ENCODE measurements at regions of chr7 and their contacts with region 1.

Region 1: DNA sequence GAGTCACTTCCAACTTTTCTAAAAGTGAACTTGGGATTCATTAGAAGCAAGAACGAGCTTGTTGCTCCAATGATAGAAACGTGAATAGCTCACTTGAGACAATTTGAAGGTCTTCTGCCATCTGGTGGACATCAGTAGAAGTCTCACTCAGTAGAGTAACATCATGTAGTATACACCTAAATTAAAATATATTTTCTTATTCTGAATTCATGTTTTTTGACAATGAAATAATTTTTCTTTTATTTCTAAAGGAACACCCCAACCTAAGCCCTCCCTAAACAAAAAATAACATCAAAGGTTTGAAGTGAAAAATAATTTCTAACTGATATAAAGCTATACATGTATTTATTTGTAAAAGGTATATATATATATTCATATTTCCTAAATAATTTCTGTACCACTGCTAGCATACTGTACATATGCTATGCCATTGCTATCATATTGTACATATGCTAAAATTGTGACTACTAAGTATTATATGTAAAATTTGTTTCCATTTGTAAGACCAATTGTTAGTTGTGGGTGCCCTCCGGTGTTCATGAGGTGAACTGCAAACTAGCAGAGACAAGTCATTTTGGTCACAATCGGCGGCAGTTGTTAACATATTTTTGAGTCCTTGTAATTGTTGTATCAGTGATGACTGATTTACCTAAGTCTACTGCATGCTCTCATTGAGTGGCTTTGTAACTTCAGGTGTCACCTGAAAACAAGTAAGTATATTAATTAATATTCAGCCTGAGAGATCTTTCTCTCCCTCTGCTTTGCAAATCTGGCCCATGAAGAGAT is 121.9 kb downstream of the PTPRZ1 start:
- DNase-seq: peak; percentile 55
- H3K4me3 ChIP-seq: no peak overlapping the region
- H3K27ac ChIP-seq: no peak overlapping the region
- H3K27me3 ChIP-seq: no peaks in the 10 kb centered on the region
- CTCF ChIP-seq: peak; percentile 79

Region 2: GRCh38 chr7:121605317-121605680 is 389.5 kb before region 1 on chr7:
- CTCF ChIA-PET with region 1: interaction called, 31 read pairs
- POLR2A ChIA-PET with region 1: no interaction called
- DNase-seq: no peak
- H3K4me3 ChIP-seq: no peak overlapping the region
- H3K27ac ChIP-seq: no peak overlapping the region
- H3K27me3 ChIP-seq: no peaks in the 10 kb centered on the region
- CTCF ChIP-seq: 0 out of 2 replicates have a peak, but pooled peaks have one; percentile 19

Region 3: DNA sequence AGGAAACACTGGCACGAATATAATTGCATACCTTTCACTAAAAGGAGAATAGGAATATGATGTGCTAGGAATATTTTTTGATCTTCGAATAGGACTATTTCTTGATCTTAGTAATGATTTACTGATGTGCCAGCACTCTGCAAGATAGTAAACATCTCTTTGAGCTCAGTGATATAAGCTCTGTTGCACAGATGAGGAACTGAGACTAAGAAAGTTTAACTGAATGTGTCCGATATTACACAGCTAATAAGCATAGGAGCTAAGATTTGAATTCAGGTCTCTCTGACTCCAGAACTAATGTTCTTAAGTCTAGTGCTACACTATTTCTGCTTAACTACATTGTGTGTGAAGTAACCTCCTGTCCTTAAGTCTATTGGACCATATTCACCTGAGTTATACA is 220.3 kb before region 1 on chr7:
- CTCF ChIA-PET with region 1: interaction called, 12 read pairs
- POLR2A ChIA-PET with region 1: no interaction called
- DNase-seq: no peak
- H3K4me3 ChIP-seq: no peak overlapping the region
- H3K27ac ChIP-seq: no peak overlapping the region
- H3K27me3 ChIP-seq: no peaks in the 10 kb centered on the region
- CTCF ChIP-seq: no peak

Region 4: GRCh38 chr7:121872831-121873288 is 122.0 kb before region 1 on chr7 and contains the start of gene PTPRZ1:
- CTCF ChIA-PET with region 1: interaction called, 19 read pairs
- POLR2A ChIA-PET with region 1: no interaction called
- DNase-seq: no peak
- H3K4me3 ChIP-seq: peak within 1 kb of the TSS; percentile 54
- H3K27ac ChIP-seq: no peak within 1 kb of the TSS
- H3K27me3 ChIP-seq: peaks cover 36% of the 10 kb centered on the region
- CTCF ChIP-seq: no peak
- polyA plus RNA-seq, gene PTPRZ1: not detected in 2 replicates

Region 5: DNA sequence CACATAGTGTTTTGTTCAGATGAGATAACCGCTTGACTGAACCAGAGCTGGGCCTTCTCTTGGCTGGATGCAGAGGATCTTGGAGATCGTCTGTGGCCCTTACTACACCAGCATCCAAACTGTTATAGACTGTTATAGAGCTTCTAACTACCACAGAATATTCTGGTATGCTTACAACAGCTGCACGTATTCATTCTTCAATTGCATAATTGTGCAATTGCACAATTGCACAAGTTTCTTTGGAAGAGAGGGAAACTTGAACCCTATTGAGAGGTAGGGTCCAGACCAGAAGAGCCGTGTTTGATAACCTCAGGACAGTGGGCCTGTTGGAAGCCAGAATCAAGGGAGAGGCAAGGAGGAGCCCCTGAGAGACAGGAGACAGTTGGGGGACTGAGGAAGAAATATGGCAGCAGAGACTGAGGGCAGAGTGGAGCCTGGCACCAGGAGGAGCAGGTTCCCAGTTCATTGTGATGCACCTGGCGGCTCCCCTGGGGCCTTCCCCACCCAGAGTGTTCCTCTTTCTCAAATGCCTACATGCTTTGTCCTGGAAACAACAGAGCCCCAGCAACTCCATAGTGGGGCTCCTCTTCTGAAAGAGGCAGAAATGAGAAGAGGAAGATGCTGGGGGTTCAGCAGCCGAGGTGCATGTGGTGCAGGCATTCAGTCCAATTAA is 57.7 kb before region 1 on chr7:
- CTCF ChIA-PET with region 1: interaction called, 15 read pairs
- POLR2A ChIA-PET with region 1: no interaction called
- DNase-seq: no peak
- H3K4me3 ChIP-seq: no peak overlapping the region
- H3K27ac ChIP-seq: no peak overlapping the region
- H3K27me3 ChIP-seq: no peaks in the 10 kb centered on the region
- CTCF ChIP-seq: no peak

Region 6: GRCh38 chr7:121961089-121961867 is 33.5 kb before region 1 on chr7:
- CTCF ChIA-PET with region 1: interaction called, 24 read pairs
- POLR2A ChIA-PET with region 1: no interaction called
- DNase-seq: peak; percentile 26
- H3K4me3 ChIP-seq: no peak overlapping the region
- H3K27ac ChIP-seq: peak overlapping the region; percentile 32
- H3K27me3 ChIP-seq: no peaks in the 10 kb centered on the region
- CTCF ChIP-seq: no peak

Region 7: GRCh38 chr7:122014697-122015096 is 19.9 kb after region 1 on chr7:
- CTCF ChIA-PET with region 1: interaction called, 18 read pairs
- POLR2A ChIA-PET with region 1: no interaction called
- DNase-seq: no peak
- H3K4me3 ChIP-seq: no peak overlapping the region
- H3K27ac ChIP-seq: no peak overlapping the region
- H3K27me3 ChIP-seq: no peaks in the 10 kb centered on the region
- CTCF ChIP-seq: 0 out of 2 replicates have a peak, but pooled peaks have one; percentile 19

Region 8: DNA sequence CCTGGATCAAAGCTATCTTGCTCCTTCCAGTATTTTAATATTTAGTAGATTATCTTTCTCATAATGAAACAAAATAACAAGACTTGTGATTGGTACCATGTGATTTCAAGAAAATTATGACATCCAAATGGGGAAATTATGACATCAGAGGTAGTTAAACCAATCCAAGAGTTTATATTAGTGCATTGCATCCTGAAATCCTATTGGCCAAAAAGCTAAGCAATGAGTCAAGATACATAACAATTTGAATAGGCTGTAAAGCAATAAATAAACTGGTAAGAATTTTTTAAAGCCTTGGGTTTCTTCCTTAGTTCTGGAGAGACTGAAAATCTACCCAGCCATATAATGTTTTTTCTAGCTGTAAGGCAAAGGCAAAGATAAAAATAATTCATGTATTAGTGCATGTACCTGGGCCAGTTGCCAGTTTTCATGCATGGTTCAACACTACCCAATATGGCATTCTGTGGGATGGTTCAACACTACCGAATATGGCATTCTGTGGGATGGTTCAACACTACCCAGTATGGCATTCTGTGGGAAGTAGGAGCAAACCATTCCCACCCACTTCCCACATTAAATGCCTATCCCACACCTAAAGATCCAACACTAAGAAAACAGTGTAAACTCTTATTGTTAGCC is 708.2 kb after region 1 on chr7 and contains the start of gene RNF148:
- CTCF ChIA-PET with region 1: no interaction called
- POLR2A ChIA-PET with region 1: no interaction called
- DNase-seq: no peak
- H3K4me3 ChIP-seq: no peak within 1 kb of the TSS
- H3K27ac ChIP-seq: no peak within 1 kb of the TSS
- H3K27me3 ChIP-seq: no peaks in the 10 kb centered on the region
- CTCF ChIP-seq: no peak
- polyA plus RNA-seq, gene RNF148: not detected in 2 replicates

Measured in AG04450 (cell line).